T-cell (primary cell): ENCODE measurements at regions of chr13 and their contacts with region 1.

Region 1: GRCh38 chr13:24220086-24220703 is 59.7 kb downstream of the SPATA13 start:
- DNase-seq: peak in 27 of 35 experiments; percentile 20 to 87 (median 39)
- ATAC-seq: peak; percentile 72 to 87 (median 80)
- H3K4me3 ChIP-seq: no peak overlapping the region
- H3K4me3 Mint-ChIP-seq: no peak overlapping the region
- H3K27ac ChIP-seq: no peak overlapping the region
- H3K27ac Mint-ChIP-seq: peak overlapping the region in 1 of 2 donors; percentile 55
- H3K4me1 ChIP-seq: peaks cover 8 to 32% of the 10 kb centered on the region in 2 experiments
- H3K4me1 Mint-ChIP-seq: peaks cover 19 to 29% (median 27%) of the 10 kb centered on the region in 3 donors
- H3K27me3 ChIP-seq: no peaks in the 10 kb centered on the region
- H3K27me3 Mint-ChIP-seq: no peaks in the 10 kb centered on the region

Region 2: GRCh38 chr13:23921451-23921888 is 298.7 kb before region 1 on chr13:
- CTCF ChIA-PET with region 1: no interaction called
- POLR2A ChIA-PET with region 1: interaction called in 1 of 2 experiments, 10 read pairs
- DNase-seq: peak in 2 of 35 experiments; percentile 1 to 52
- ATAC-seq: no peak
- H3K4me3 ChIP-seq: no peak overlapping the region
- H3K4me3 Mint-ChIP-seq: no peak overlapping the region
- H3K27ac ChIP-seq: no peak overlapping the region
- H3K27ac Mint-ChIP-seq: no peak overlapping the region
- H3K4me1 ChIP-seq: no peaks in the 10 kb centered on the region
- H3K4me1 Mint-ChIP-seq: no peaks in the 10 kb centered on the region
- H3K27me3 ChIP-seq: peaks cover 0 to 3% of the 10 kb centered on the region in 2 experiments
- H3K27me3 Mint-ChIP-seq: peaks cover 31 to 42% of the 10 kb centered on the region in 2 donors

Region 3: GRCh38 chr13:24020375-24020830 is 199.8 kb before region 1 on chr13:
- CTCF ChIA-PET with region 1: interaction called, 3 to 13 read pairs
- POLR2A ChIA-PET with region 1: no interaction called
- DNase-seq: peak in 22 of 35 experiments; percentile 5 to 59 (median 20)
- ATAC-seq: peak in 1 of 4 experiments; percentile 45
- H3K4me3 ChIP-seq: no peak overlapping the region
- H3K4me3 Mint-ChIP-seq: no peak overlapping the region
- H3K27ac ChIP-seq: no peak overlapping the region
- H3K27ac Mint-ChIP-seq: no peak overlapping the region
- H3K4me1 ChIP-seq: no peaks in the 10 kb centered on the region
- H3K4me1 Mint-ChIP-seq: no peaks in the 10 kb centered on the region
- H3K27me3 ChIP-seq: peaks cover 0 to 12% of the 10 kb centered on the region in 2 experiments
- H3K27me3 Mint-ChIP-seq: peaks cover 0 to 4% of the 10 kb centered on the region in 2 donors

Region 4: GRCh38 chr13:24053519-24054251 is 166.5 kb before region 1 on chr13:
- CTCF ChIA-PET with region 1: interaction called, 14 to 15 read pairs
- POLR2A ChIA-PET with region 1: no interaction called
- DNase-seq: peak; percentile 16 to 77 (median 50)
- ATAC-seq: peak; percentile 85 to 98 (median 91)
- H3K4me3 ChIP-seq: no peak overlapping the region
- H3K4me3 Mint-ChIP-seq: no peak overlapping the region
- H3K27ac ChIP-seq: no peak overlapping the region
- H3K27ac Mint-ChIP-seq: no peak overlapping the region
- H3K4me1 ChIP-seq: no peaks in the 10 kb centered on the region
- H3K4me1 Mint-ChIP-seq: peaks cover 8 to 12% (median 9%) of the 10 kb centered on the region in 3 donors
- H3K27me3 ChIP-seq: peaks cover 0 to 13% of the 10 kb centered on the region in 2 experiments
- H3K27me3 Mint-ChIP-seq: peaks cover 0 to 9% of the 10 kb centered on the region in 2 donors

Region 5: GRCh38 chr13:24060993-24061392 is 159.2 kb before region 1 on chr13:
- CTCF ChIA-PET with region 1: interaction called, 11 to 14 read pairs
- POLR2A ChIA-PET with region 1: no interaction called
- DNase-seq: no peak
- ATAC-seq: no peak
- H3K4me3 ChIP-seq: no peak overlapping the region
- H3K4me3 Mint-ChIP-seq: no peak overlapping the region
- H3K27ac ChIP-seq: no peak overlapping the region
- H3K27ac Mint-ChIP-seq: no peak overlapping the region
- H3K4me1 ChIP-seq: peaks cover 4 to 8% of the 10 kb centered on the region in 2 experiments
- H3K4me1 Mint-ChIP-seq: peaks cover 11 to 24% (median 12%) of the 10 kb centered on the region in 3 donors
- H3K27me3 ChIP-seq: peaks cover 0 to 4% of the 10 kb centered on the region in 2 experiments
- H3K27me3 Mint-ChIP-seq: no peaks in the 10 kb centered on the region